ENCODE measurements at regions of chr6 and their contacts with region 1.

Region 1: DNA sequence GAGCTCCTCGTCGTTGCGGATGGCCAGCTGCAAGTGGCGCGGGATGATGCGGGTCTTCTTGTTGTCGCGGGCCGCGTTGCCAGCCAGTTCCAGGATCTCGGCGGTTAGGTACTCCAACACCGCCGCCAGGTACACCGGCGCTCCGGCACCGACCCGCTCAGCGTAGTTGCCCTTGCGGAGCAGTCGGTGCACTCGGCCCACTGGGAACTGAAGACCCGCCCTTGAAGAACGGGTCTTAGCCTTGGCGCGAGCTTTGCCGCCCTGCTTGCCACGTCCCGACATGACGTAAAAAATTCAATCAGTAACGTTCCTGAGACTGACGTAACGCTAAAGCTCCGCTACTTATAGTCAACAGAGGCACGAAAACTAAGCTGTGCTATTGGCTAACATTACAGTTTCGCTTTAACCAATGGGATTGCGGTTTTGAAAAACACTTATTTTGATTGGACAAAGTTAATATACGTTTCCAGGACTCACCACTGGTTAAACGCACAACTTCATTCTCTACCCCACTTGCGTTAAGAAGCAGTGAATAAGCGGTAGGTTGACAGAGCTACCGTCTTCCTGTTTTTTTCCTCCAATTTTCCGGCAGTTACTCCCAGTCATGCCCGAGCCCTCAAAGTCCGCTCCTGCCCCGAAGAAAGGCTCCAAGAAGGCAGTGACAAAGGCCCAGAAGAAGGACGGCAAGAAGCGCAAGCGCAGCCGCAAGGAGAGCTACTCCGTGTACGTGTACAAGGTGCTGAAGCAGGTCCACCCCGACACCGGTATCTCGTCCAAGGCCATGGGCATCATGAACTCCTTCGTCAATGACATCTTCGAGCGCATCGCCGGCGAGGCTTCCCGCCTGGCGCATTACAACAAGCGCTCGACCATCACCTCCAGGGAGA is 73.9 kb downstream of the OR2B2 start:
- DNase-seq: peak; percentile 52 to 98 (median 73)
- ATAC-seq: peak; percentile 73
- H3K4me3 ChIP-seq: peak overlapping the region; percentile 83
- H3K4me3 Mint-ChIP-seq: no peak overlapping the region
- H3K27ac ChIP-seq: peak overlapping the region; percentile 92 to 97
- H3K27ac Mint-ChIP-seq: no peak overlapping the region
- H3K4me1 ChIP-seq: peaks cover 32% of the 10 kb centered on the region
- H3K4me1 Mint-ChIP-seq: peaks cover 6% of the 10 kb centered on the region
- H3K27me3 ChIP-seq: peaks cover 0 to 6% of the 10 kb centered on the region in 2 experiments
- H3K27me3 Mint-ChIP-seq: peaks cover 12% of the 10 kb centered on the region
- CTCF ChIP-seq: no peak

Region 2: DNA sequence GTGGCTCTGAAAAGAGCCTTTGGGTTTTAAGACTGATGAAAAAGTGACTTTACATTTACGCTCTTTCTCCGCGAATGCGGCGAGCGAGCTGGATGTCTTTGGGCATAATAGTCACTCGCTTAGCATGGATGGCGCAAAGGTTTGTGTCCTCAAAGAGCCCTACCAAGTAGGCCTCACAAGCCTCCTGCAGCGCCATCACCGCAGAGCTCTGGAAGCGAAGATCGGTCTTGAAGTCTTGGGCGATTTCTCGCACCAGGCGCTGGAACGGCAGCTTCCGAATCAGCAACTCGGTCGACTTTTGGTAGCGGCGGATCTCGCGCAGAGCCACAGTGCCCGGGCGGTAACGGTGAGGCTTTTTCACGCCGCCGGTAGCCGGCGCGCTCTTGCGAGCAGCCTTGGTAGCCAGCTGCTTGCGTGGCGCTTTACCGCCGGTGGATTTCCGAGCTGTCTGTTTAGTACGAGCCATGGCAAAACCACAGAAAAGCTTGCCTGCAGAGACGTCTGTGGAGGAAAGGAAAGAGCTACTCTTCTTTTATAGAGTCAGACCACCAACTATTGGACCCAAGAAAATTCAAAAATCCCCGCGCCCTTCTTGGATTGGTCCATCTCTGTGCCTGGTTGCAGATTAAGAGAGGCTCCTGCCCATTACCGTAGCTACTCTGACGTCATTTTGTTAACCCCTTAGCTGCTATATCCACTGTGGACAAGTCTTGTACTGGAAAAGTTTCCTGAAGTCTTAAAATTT is 1806.5 kb before region 1 on chr6:
- CTCF ChIA-PET with region 1: no interaction called
- POLR2A ChIA-PET with region 1: interaction called, 49 read pairs
- intact Hi-C with region 1: no loop called
- DNase-seq: peak; percentile 73 to 94 (median 81)
- ATAC-seq: peak; percentile 65
- H3K4me3 ChIP-seq: peak overlapping the region; percentile 64
- H3K4me3 Mint-ChIP-seq: peak overlapping the region; percentile 97
- H3K27ac ChIP-seq: peak overlapping the region; percentile 42 to 72
- H3K27ac Mint-ChIP-seq: peak overlapping the region; percentile 99
- H3K4me1 ChIP-seq: peaks cover 35% of the 10 kb centered on the region
- H3K4me1 Mint-ChIP-seq: peaks cover 46% of the 10 kb centered on the region
- H3K27me3 ChIP-seq: no peaks in the 10 kb centered on the region
- H3K27me3 Mint-ChIP-seq: no peaks in the 10 kb centered on the region
- CTCF ChIP-seq: peak; percentile 22

Region 3: DNA sequence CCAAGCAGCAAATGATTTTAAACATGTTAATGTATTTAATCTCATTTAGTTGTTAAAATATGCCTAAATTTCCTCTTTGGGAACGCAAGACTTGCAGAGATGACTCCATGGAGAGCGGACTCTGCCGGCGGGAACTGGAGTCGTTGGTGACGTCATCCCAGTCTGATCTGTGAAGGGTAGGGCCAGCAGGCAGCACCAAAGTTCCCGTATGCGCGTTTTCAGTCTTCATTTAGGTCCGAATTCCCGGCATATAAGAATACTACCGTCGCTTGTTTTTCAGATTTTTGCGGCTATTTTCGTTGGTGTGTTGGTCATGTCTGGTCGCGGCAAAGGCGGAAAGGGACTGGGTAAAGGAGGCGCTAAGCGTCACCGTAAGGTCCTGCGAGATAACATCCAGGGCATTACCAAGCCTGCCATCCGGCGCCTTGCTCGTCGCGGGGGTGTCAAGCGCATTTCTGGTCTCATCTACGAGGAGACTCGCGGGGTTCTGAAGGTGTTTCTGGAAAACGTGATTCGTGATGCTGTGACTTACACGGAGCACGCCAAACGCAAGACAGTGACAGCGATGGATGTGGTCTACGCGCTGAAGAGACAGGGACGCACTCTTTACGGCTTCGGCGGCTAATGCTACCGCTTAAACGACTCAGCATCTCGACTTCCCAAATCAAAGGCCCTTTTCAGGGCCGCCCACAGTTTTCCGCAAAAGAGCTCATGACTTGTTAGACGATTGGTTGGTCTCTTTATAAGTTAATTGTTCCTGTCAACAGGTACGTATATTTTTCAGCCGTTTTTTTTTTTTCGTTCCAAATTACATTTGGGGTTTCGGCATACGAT is 1633.8 kb before region 1 on chr6:
- CTCF ChIA-PET with region 1: no interaction called
- POLR2A ChIA-PET with region 1: interaction called, 129 read pairs
- intact Hi-C with region 1: no loop called
- DNase-seq: peak; percentile 73 to 98 (median 80)
- ATAC-seq: peak; percentile 69
- H3K4me3 ChIP-seq: peak overlapping the region; percentile 68
- H3K4me3 Mint-ChIP-seq: no peak overlapping the region
- H3K27ac ChIP-seq: peak overlapping the region; percentile 89 to 90
- H3K27ac Mint-ChIP-seq: no peak overlapping the region
- H3K4me1 ChIP-seq: peaks cover 34% of the 10 kb centered on the region
- H3K4me1 Mint-ChIP-seq: peaks cover 8% of the 10 kb centered on the region
- H3K27me3 ChIP-seq: no peaks in the 10 kb centered on the region
- H3K27me3 Mint-ChIP-seq: no peaks in the 10 kb centered on the region
- CTCF ChIP-seq: peak; percentile 32

Region 4: GRCh38 chr6:27146706-27147505 is 691.4 kb before region 1 on chr6:
- CTCF ChIA-PET with region 1: no interaction called
- POLR2A ChIA-PET with region 1: interaction called, 83 read pairs
- intact Hi-C with region 1: no loop called
- DNase-seq: peak; percentile 61 to 99 (median 72)
- ATAC-seq: peak; percentile 86
- H3K4me3 ChIP-seq: peak overlapping the region; percentile 69
- H3K4me3 Mint-ChIP-seq: no peak overlapping the region
- H3K27ac ChIP-seq: peak overlapping the region; percentile 84 to 97
- H3K27ac Mint-ChIP-seq: no peak overlapping the region
- H3K4me1 ChIP-seq: peaks cover 17% of the 10 kb centered on the region
- H3K4me1 Mint-ChIP-seq: peaks cover 11% of the 10 kb centered on the region
- H3K27me3 ChIP-seq: no peaks in the 10 kb centered on the region
- H3K27me3 Mint-ChIP-seq: no peaks in the 10 kb centered on the region
- CTCF ChIP-seq: no peak

Region 5: DNA sequence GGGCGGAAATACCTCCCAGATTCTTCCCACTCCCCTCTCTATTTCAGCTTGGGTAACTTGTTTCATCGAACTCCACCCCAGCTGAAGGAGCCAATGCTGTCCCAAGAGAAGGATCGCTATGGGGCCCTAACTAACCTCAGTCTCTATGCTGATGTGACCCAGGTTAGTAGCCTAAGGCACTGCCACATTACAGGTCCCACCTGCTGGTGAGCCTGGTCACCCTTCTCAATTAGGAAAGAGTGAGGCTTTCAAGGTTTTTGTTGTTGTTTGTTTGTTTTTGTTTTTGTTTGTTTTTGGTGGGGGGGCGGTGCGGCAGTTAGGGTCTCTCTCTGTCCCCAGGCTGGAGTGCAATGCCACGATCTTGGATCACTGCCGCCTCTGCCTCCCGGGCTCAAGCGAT is 94.5 kb before region 1 on chr6:
- CTCF ChIA-PET with region 1: no interaction called
- POLR2A ChIA-PET with region 1: no interaction called
- intact Hi-C with region 1: no loop called
- DNase-seq: no peak
- ATAC-seq: no peak
- H3K4me3 ChIP-seq: no peak overlapping the region
- H3K4me3 Mint-ChIP-seq: no peak overlapping the region
- H3K27ac ChIP-seq: no peak overlapping the region
- H3K27ac Mint-ChIP-seq: no peak overlapping the region
- H3K4me1 ChIP-seq: peaks cover 7% of the 10 kb centered on the region
- H3K4me1 Mint-ChIP-seq: no peaks in the 10 kb centered on the region
- H3K27me3 ChIP-seq: peaks cover 11 to 27% of the 10 kb centered on the region in 2 experiments
- H3K27me3 Mint-ChIP-seq: peaks cover 69% of the 10 kb centered on the region
- CTCF ChIP-seq: no peak

Region 6: GRCh38 chr6:27753668-27754407 is 84.5 kb before region 1 on chr6:
- CTCF ChIA-PET with region 1: interaction called, 7 read pairs
- POLR2A ChIA-PET with region 1: interaction called, 12 read pairs
- intact Hi-C with region 1: no loop called
- DNase-seq: peak; percentile 31 to 81 (median 54)
- ATAC-seq: peak; percentile 11
- H3K4me3 ChIP-seq: peak overlapping the region; percentile 71
- H3K4me3 Mint-ChIP-seq: peak overlapping the region; percentile 97
- H3K27ac ChIP-seq: no peak overlapping the region
- H3K27ac Mint-ChIP-seq: peak overlapping the region; percentile 98
- H3K4me1 ChIP-seq: peaks cover 22% of the 10 kb centered on the region
- H3K4me1 Mint-ChIP-seq: peaks cover 41% of the 10 kb centered on the region
- H3K27me3 ChIP-seq: no peaks in the 10 kb centered on the region
- H3K27me3 Mint-ChIP-seq: peaks cover 10% of the 10 kb centered on the region
- CTCF ChIP-seq: no peak

Region 7: GRCh38 chr6:27864906-27865849 is 26.9 kb after region 1 on chr6:
- CTCF ChIA-PET with region 1: interaction called, 28 read pairs
- POLR2A ChIA-PET with region 1: interaction called, 1,427 read pairs
- intact Hi-C with region 1: loop called (anchors 1 to 2 kb)
- DNase-seq: peak in 13 of 14 experiments; percentile 35 to 97 (median 61)
- ATAC-seq: peak; percentile 83
- H3K4me3 ChIP-seq: peak overlapping the region; percentile 59
- H3K4me3 Mint-ChIP-seq: peak overlapping the region; percentile 100
- H3K27ac ChIP-seq: peak overlapping the region; percentile 54 to 78
- H3K27ac Mint-ChIP-seq: peak overlapping the region; percentile 93
- H3K4me1 ChIP-seq: peaks cover 38% of the 10 kb centered on the region
- H3K4me1 Mint-ChIP-seq: peaks cover 41% of the 10 kb centered on the region
- H3K27me3 ChIP-seq: no peaks in the 10 kb centered on the region
- H3K27me3 Mint-ChIP-seq: peaks cover 3% of the 10 kb centered on the region
- CTCF ChIP-seq: no peak